ENCODE measurements at regions of chr2 and their contacts with region 1.

Region 1: GRCh38 chr2:68878753-68879152 is 7.6 kb upstream of the BMP10 start:
- DNase-seq: no peak
- ATAC-seq: no peak
- H3K4me3 ChIP-seq: no peak overlapping the region
- H3K27ac ChIP-seq: no peak overlapping the region
- H3K4me1 ChIP-seq: 0 out of 3 replicates have a peak, but pooled peaks cover 8% of the 10 kb centered on the region
- CTCF ChIP-seq: no peak
- EP300 ChIP-seq: no peak
- POLR2A ChIP-seq: no peak
- RAD21 ChIP-seq: no peak

Region 2: DNA sequence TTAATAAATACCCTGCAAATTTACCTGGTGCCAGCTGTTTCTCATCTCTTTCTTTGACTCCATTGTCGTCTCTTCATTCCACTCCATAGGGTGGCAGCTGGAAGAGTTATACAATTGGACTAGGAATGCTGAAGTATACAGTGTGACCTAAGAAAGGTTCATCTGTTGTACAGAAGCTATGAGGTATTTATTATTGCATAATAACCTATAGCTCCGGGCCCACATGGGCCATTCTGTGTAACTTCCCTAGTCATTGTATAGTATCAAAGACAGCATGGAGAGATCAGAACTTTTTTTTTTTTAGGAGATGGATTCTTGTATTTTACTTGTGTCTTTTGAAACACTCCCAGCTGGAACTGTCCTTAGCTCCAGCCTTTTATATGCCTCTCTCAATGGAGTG is 33.7 kb before region 1 on chr2:
- CTCF ChIA-PET with region 1: no interaction called
- POLR2A ChIA-PET with region 1: no interaction called
- DNase-seq: no peak
- ATAC-seq: no peak
- H3K4me3 ChIP-seq: no peak overlapping the region
- H3K27ac ChIP-seq: no peak overlapping the region
- H3K4me1 ChIP-seq: no peaks in the 10 kb centered on the region
- CTCF ChIP-seq: no peak
- EP300 ChIP-seq: no peak
- POLR2A ChIP-seq: no peak
- RAD21 ChIP-seq: no peak

Region 3: DNA sequence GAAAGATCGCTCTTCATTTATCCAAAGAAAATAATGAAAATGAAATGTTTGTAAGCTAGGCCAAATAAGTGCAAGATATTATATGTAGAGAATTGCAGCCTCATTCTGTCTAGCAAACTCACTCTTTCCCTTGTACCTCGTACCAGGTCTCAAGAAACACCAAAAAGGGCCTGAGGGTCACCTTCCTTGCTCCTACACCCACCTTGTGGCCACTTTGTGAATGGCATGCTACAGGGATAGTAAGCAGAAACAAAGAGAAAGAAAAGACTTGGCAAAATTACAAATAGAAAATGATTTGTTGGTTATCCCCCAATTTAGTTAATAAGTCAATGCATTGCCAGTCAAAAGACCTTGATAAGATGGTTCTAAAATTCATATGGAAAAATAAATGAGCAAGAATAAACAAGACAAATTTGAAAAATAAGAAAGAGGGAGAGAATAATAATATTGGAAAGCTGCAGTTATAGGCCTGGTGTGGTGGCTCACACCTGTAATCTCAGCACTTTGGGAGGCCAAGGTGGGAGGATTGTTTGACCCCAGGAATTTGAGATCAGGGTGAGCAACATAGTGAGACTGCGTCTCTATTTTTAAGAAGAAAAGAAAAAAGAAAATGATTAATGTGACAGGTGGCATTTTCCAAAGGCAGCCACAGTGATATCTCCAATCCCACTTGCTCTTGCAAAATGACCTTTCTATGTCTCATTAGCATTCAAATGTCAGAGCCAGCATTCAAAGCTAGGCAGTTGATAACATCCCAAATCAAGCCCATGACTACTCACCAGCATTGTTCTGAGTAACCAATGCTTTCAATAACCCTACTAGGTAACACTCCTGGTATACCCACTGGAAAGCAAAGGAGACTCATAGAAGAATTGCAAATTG is 31.3 kb after region 1 on chr2:
- CTCF ChIA-PET with region 1: interaction called, 18 read pairs
- POLR2A ChIA-PET with region 1: no interaction called
- DNase-seq: peak; percentile 60 to 85
- ATAC-seq: peak in 1 of 2 experiments; percentile 66; a peak in 3 of 6 replicates
- H3K4me3 ChIP-seq: no peak overlapping the region
- H3K27ac ChIP-seq: peak overlapping the region in 1 of 2 experiments; percentile 85; a peak in 4 of 6 replicates
- H3K4me1 ChIP-seq: peaks cover 25% of the 10 kb centered on the region
- CTCF ChIP-seq: peak; percentile 79
- EP300 ChIP-seq: no peak
- POLR2A ChIP-seq: no peak
- RAD21 ChIP-seq: peak; percentile 76 to 80

Measured in A549 (cell line).